SK-N-SH (cell line): ENCODE measurements at regions of chr12 and their contacts with region 1.

Region 1: DNA sequence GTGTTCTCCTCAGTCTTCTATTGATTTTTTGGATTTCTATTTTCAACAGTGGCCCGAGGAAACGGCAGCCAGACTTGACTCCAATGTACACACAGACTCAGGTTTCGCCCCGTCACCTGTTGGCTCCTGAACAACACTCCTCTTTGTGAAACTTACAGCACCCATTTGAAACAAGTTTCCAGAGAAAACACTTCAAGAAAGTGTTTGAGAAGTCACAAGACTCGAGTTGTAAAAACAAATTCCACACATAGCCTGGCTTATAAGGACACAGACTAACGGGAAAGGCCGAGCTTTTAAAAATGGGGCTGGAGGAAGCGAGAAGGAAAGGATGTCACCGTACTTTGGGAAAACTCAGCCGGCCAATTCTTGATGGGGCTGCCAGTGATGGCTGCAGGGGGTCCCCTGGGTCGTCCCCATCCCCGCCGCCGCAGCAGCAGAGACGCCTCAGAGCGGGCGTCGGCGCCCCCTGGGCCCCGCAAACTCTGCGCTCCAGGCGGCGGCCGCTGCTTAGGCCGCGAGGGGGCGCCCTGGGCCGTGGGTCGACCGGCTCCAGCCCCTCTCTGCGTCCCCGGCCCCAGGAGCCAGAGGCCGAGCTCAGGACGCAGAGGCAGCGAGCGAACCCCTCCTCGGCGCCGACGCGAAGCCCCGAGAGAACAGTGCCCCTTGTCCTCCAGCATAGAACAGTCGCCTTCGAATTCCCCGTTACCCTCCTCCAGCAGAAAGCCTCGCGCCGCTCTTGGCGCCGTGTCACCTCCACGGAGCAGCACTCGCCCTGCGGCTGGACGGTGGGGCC is 106.9 kb downstream of the PRICKLE1 start:
- DNase-seq: peak; percentile 96
- H3K4me3 ChIP-seq: peak overlapping the region; percentile 65 to 78
- H3K27ac ChIP-seq: peak overlapping the region in 1 of 2 experiments; percentile 82; a peak in 1 of 4 replicates
- H3K4me1 ChIP-seq: peaks cover 0 to 14% of the 10 kb centered on the region in 2 experiments; a peak in 2 of 4 replicates
- H3K27me3 ChIP-seq: peaks cover 13% of the 10 kb centered on the region; the same call in 1 of the 2 replicates
- CTCF ChIP-seq: peak; percentile 78
- EP300 ChIP-seq: no peak
- RAD21 ChIP-seq: peak; percentile 83

Region 2: GRCh38 chr12:42462486-42462885 is 20.2 kb before region 1 on chr12:
- CTCF ChIA-PET with region 1: interaction called, 41 read pairs
- POLR2A ChIA-PET with region 1: no interaction called
- DNase-seq: no peak
- H3K4me3 ChIP-seq: no peak overlapping the region
- H3K27ac ChIP-seq: no peak overlapping the region
- H3K4me1 ChIP-seq: no peaks in the 10 kb centered on the region
- H3K27me3 ChIP-seq: no peaks in the 10 kb centered on the region
- CTCF ChIP-seq: no peak
- EP300 ChIP-seq: no peak
- RAD21 ChIP-seq: no peak

Region 3: DNA sequence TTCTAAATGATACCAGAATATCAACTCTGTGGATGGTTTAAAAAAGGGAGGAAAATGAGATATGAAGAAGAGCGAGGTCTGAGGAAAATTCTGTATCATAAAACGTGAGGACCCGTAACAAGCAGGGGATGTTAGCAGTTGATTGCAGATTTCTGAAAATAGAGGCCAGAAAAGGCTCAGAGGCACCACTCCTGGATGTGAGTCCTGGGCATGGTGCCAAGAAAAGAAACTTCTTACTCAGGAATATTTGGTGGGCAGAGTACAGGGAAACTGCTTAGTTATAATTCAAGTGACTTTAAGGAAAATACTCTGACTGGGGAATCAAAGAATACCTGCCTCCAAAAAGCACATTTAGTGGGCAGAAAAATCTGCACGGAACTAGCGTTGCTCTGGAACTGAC is 21.4 kb after region 1 on chr12:
- CTCF ChIA-PET with region 1: interaction called, 29 read pairs
- POLR2A ChIA-PET with region 1: no interaction called
- DNase-seq: peak; percentile 36
- H3K4me3 ChIP-seq: no peak overlapping the region
- H3K27ac ChIP-seq: no peak overlapping the region
- H3K4me1 ChIP-seq: peaks cover 0 to 6% of the 10 kb centered on the region in 2 experiments; a peak in 2 of 4 replicates
- H3K27me3 ChIP-seq: no peaks in the 10 kb centered on the region
- CTCF ChIP-seq: no peak
- EP300 ChIP-seq: no peak
- RAD21 ChIP-seq: no peak

Region 4: GRCh38 chr12:42560977-42561376 is 78.3 kb after region 1 on chr12:
- CTCF ChIA-PET with region 1: interaction called, 206 read pairs
- POLR2A ChIA-PET with region 1: interaction called, 3 read pairs
- DNase-seq: no peak
- H3K4me3 ChIP-seq: no peak overlapping the region
- H3K27ac ChIP-seq: no peak overlapping the region
- H3K4me1 ChIP-seq: peaks cover 0 to 18% of the 10 kb centered on the region in 2 experiments; a peak in 2 of 4 replicates
- H3K27me3 ChIP-seq: no peaks in the 10 kb centered on the region
- CTCF ChIP-seq: no peak
- EP300 ChIP-seq: no peak
- RAD21 ChIP-seq: no peak

Region 5: DNA sequence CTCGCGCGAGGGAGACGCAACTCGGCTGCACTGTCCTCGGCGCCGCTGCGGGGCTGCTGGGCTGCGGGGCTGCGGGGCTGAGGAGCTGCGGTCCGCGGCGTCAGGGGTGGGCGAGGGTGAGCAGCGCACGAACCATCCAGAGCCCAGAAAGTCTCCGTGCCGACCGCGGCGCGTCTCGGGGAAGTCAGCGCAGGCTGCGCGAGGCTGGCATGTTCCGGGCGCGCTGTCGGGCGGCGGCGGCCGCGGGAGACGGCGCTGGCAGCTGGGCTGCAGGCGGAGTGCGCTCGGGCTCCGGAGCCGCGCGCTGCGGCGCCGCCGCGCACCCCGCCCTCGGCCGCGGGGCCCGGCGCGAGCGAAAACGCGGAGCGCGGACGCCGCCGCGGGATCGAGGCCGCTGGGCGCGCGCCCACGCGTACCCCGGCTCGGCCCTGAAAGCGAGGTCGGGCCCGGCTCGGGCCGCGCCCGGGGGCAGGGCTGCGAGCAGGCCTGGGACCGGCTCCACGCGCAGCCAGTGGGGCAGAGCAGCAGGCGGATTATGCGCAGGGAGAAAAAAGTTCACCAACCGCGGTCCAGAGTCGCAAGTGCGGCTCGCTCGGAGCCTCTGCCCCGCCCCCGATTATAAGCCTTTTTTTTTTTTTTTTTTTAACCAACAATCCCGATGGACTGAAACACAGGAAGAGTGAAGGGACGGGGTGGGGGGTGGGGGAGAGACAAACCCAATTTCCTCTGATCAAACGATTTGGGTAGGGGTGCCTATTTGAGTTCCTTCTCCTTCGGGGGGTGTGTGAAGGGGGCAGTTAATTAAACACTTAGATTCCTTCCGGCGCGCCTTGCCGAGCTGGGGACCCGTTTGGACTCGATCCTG is 107.1 kb after region 1 on chr12 and contains the start of gene PRICKLE1:
- CTCF ChIA-PET with region 1: interaction called, 25 read pairs
- POLR2A ChIA-PET with region 1: interaction called, 3 read pairs
- DNase-seq: peak; percentile 90
- H3K4me3 ChIP-seq: peak within 1 kb of the TSS; percentile 61 to 62
- H3K27ac ChIP-seq: peak within 1 kb of the TSS in 1 of 2 experiments; percentile 58; a peak in 2 of 4 replicates
- H3K4me1 ChIP-seq: peaks cover 7 to 25% of the 10 kb centered on the region in 2 experiments; a peak in 3 of 4 replicates
- H3K27me3 ChIP-seq: peaks cover 33% of the 10 kb centered on the region
- CTCF ChIP-seq: no peak
- EP300 ChIP-seq: no peak
- RAD21 ChIP-seq: no peak
- polyA plus RNA-seq, gene PRICKLE1: 0.45 and 1.2 TPM in 2 replicates

Region 6: GRCh38 chr12:43338848-43339526 is 856.3 kb after region 1 on chr12:
- CTCF ChIA-PET with region 1: interaction called, 30 read pairs
- POLR2A ChIA-PET with region 1: no interaction called
- DNase-seq: peak; percentile 31
- H3K4me3 ChIP-seq: peak overlapping the region in 1 of 2 experiments; percentile 28; a peak in 1 of 4 replicates
- H3K27ac ChIP-seq: peak overlapping the region in 1 of 2 experiments; percentile 53; a peak in 2 of 4 replicates
- H3K4me1 ChIP-seq: peaks cover 0 to 6% of the 10 kb centered on the region in 2 experiments; a peak in 2 of 4 replicates
- H3K27me3 ChIP-seq: no peaks in the 10 kb centered on the region
- CTCF ChIP-seq: peak; percentile 70
- EP300 ChIP-seq: no peak
- RAD21 ChIP-seq: peak; percentile 93